Activated CD4-positive, alpha-beta memory T cell treated with anti-CD3 and anti-CD28 coated beads, Interleukin-2, amount 10 ng/mL, durations not matched to agents 7 days and 5 days (primary cell): ENCODE measurements at regions of chr15 and their contacts with region 1.

Region 1: GRCh38 chr15:74950078-74951000 is 6.2 kb downstream of the RPP25 start:
- DNase-seq: peak; percentile 83
- H3K4me3 Mint-ChIP-seq: no peak overlapping the region
- H3K27ac Mint-ChIP-seq: no peak overlapping the region
- H3K4me1 Mint-ChIP-seq: peaks cover 15% of the 10 kb centered on the region
- H3K27me3 Mint-ChIP-seq: peaks cover 1% of the 10 kb centered on the region

Region 2: DNA sequence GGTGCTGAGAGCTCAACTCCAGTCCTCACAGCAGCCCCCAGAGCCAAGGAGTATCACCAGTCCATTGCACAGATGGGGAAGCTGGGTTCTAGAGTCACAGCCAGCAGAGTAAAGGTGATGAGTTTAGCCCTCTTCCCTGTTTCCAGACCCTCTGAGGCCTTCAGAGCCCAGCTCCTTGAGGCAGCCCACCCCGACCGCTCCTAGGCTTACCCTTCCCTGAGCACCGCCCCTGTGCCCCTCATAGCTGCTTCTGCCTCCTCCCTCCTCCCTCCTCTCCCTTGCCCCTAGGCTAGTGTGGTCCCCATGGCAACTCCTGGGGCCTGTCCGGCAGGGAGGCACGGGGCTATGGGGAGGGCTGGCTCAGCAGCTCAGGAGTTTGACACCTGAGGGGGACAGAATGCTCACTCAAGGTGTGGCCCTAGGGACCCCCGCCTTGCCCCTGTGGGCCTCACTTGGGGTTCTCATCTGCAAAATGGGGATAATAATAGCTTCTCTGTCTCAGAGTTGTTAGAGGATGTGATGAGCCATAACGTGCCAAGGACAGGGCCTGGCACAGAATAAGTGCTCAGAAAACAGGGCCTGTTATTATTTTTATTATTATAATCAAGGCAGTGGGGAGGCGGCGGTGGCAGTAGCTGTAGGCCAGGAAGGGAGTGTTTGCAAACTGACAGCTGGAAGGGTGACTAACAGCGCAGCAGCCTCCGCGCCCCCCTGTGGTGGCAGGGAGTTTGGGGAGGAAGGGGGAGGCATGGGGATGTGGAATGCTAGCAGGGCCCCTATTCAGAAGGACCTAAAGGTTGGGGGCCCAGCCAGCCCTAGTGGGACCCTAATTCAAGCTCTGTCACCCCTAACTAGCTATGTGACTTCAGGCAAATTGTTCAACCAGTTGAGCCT is 157.0 kb before region 1 on chr15:
- CTCF ChIA-PET with region 1: interaction called, 16 read pairs
- POLR2A ChIA-PET with region 1: no interaction called
- DNase-seq: peak; percentile 73
- H3K4me3 Mint-ChIP-seq: peak overlapping the region; percentile 10
- H3K27ac Mint-ChIP-seq: peak overlapping the region; percentile 97
- H3K4me1 Mint-ChIP-seq: peaks cover 88% of the 10 kb centered on the region
- H3K27me3 Mint-ChIP-seq: no peaks in the 10 kb centered on the region

Region 3: GRCh38 chr15:74924525-74924924 is 25.8 kb before region 1 on chr15:
- CTCF ChIA-PET with region 1: no interaction called
- POLR2A ChIA-PET with region 1: no interaction called
- DNase-seq: no peak
- H3K4me3 Mint-ChIP-seq: no peak overlapping the region
- H3K27ac Mint-ChIP-seq: no peak overlapping the region
- H3K4me1 Mint-ChIP-seq: peaks cover 15% of the 10 kb centered on the region
- H3K27me3 Mint-ChIP-seq: no peaks in the 10 kb centered on the region

Region 4: DNA sequence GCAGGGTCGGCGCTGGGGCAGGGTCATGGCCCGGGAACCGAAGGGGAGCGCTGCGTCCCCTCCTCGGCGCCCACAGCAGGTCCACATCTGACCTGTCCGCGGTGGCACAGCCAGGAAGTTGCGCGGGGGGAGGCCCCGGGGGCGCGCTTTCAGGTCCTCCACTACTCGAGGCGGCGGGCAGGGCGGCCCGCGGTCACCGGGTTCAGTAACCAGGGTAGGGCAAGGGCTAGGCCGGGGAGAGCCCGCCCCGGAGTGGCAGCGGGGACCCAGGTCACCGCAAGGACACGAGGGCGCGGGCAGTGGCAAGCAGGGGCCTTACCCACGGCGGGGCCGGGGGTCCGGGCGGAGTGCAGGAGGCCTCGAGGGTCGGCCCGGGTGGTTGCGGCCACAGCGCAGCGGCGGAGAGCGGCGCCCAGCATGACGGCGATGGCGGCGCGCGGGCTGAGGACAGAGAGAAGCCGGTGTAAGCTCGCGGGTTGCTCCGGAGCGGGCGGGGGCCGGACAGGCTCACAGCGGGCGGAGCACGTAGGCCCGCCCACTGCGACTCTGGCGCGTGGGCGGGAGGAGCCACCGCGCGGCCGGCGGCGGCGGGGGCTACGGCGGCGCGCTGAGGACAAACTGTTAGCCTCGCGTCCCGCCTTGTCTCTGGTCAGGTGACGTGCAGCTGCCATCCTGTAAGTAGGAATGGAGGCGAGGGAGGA is 12.6 kb before region 1 on chr15 and contains the start of gene COX5A:
- CTCF ChIA-PET with region 1: interaction called, 23 read pairs
- POLR2A ChIA-PET with region 1: interaction called, 5 read pairs
- DNase-seq: peak; percentile 94
- H3K4me3 Mint-ChIP-seq: peak within 1 kb of the TSS; percentile 91
- H3K27ac Mint-ChIP-seq: peak within 1 kb of the TSS; percentile 87
- H3K4me1 Mint-ChIP-seq: peaks cover 42% of the 10 kb centered on the region
- H3K27me3 Mint-ChIP-seq: no peaks in the 10 kb centered on the region
- total RNA-seq, gene COX5A: 273 to 274 TPM

Region 5: GRCh38 chr15:75076277-75076676 is 125.9 kb after region 1 on chr15:
- CTCF ChIA-PET with region 1: no interaction called
- POLR2A ChIA-PET with region 1: no interaction called
- DNase-seq: no peak
- H3K4me3 Mint-ChIP-seq: no peak overlapping the region
- H3K27ac Mint-ChIP-seq: no peak overlapping the region
- H3K4me1 Mint-ChIP-seq: peaks cover 49% of the 10 kb centered on the region
- H3K27me3 Mint-ChIP-seq: peaks cover 19% of the 10 kb centered on the region